ENCODE measurements at regions of chr22 and their contacts with region 1.

Region 1: GRCh38 chr22:27474711-27475547 is 326.6 kb downstream of the MN1 start:
- DNase-seq: peak; percentile 93 to 100
- H3K4me3 ChIP-seq: peak overlapping the region; percentile 57
- H3K27ac ChIP-seq: peak overlapping the region; percentile 98
- H3K4me1 ChIP-seq: peaks cover 47% of the 10 kb centered on the region
- H3K27me3 ChIP-seq: no peaks in the 10 kb centered on the region
- CTCF ChIP-seq: no peak

Region 2: GRCh38 chr22:27113211-27113635 is 361.7 kb before region 1 on chr22:
- CTCF ChIA-PET with region 1: no interaction called
- POLR2A ChIA-PET with region 1: no interaction called
- intact Hi-C with region 1: loop called (anchors 5 kb)
- DNase-seq: peak; percentile 57 to 95
- H3K4me3 ChIP-seq: no peak overlapping the region
- H3K27ac ChIP-seq: peak overlapping the region; percentile 77
- H3K4me1 ChIP-seq: peaks cover 74% of the 10 kb centered on the region
- H3K27me3 ChIP-seq: no peaks in the 10 kb centered on the region
- CTCF ChIP-seq: no peak

Region 3: DNA sequence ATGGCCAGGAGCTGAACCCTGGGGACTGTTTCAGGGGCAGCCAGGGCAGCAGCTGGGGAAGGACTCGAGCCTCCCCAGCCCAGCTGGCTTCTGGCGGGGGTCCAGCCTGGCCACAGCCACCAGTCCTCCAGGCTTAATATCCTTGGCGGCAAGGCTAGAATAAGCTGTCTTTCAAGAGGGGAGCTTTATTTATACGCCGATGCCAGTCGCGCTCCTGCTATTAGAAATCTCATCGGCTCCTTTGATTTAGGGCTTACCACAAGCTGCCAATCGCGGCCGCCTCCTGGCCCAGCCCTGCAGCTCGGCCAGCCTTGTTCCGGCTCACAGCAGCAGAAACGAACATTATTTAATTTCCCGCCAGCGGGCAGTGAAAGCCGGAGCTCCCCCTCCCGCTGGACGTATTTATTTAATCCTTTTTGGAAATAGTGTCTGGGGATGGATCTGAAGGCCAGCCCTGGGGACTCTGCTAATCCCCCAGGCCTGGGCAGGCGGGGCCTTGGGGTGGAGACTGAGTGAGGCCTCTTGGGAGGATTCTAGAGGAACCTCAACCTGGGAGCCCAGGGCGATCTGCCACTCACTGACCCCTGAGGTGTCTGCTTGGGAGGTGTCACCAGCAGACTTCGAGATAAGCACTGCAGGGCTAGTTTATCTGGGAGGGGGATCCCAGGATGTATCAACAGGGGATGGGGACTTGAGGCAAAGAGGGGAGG is 36.5 kb before region 1 on chr22:
- CTCF ChIA-PET with region 1: no interaction called
- POLR2A ChIA-PET with region 1: no interaction called
- intact Hi-C with region 1: loop called (anchors 2 kb)
- DNase-seq: peak in 1 of 2 experiments; percentile 27
- H3K4me3 ChIP-seq: no peak overlapping the region
- H3K27ac ChIP-seq: no peak overlapping the region
- H3K4me1 ChIP-seq: peaks cover 10% of the 10 kb centered on the region
- H3K27me3 ChIP-seq: no peaks in the 10 kb centered on the region
- CTCF ChIP-seq: no peak

Region 4: DNA sequence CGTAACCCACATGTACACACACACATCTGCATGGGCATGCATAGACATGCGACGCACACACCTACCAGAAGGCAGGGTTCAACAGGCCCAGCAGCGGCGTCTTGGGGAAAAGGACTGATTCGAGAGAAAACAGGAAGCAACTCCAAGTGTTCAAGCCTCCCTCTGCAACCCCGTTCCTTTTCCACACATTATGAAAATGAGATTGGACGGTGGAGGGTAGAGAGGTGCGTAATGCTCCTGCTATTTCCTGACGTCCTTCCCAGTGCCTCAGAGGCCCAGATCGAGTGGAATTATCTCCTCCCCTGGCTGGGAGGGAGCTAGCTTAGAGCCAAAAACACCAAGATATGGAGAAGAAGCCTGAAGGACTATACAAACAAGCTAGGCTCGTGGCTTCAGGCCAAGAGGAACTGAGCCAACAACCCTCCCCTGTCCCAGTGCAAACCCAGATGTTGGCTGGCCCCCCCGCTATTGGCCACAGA is 37.4 kb after region 1 on chr22:
- CTCF ChIA-PET with region 1: no interaction called
- POLR2A ChIA-PET with region 1: interaction called, 8 read pairs
- intact Hi-C with region 1: loop called (anchors 1 kb)
- DNase-seq: peak in 1 of 2 experiments; percentile 63
- H3K4me3 ChIP-seq: no peak overlapping the region
- H3K27ac ChIP-seq: no peak overlapping the region
- H3K4me1 ChIP-seq: no peaks in the 10 kb centered on the region
- H3K27me3 ChIP-seq: no peaks in the 10 kb centered on the region
- CTCF ChIP-seq: no peak

Region 5: DNA sequence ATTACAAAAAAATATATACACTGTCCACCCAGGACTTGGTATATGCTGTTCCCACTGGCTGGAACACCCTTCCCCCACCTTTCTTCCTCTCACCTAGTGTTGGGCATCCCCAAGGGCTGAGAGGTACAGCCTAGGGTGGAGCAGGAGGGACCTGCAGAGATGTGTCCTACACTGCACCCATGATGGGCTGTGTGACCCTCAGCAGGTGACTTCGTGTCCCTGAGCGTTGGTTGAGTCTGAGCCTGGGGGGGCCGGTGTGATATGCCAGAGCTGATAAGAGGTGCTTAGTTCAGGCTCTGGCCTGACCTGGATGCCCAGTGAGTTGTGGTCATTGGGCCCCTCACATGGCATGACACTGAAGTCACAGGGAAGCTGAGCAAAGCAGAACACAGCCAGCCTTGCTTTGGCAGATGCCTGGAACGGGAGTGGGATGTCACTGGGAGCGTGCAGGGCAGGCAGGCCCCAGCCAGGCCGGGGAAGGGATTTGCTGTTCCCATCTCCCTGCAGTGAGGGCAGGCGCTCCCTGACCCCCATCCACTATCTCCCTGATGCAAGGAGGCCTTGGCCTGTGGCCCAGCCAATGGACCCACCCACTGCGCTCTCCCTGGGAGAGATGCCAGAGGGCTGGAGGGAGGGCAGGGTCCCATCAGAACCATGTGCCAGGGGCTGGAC is 187.6 kb after region 1 on chr22:
- CTCF ChIA-PET with region 1: no interaction called
- POLR2A ChIA-PET with region 1: interaction called, 4 read pairs
- intact Hi-C with region 1: loop called (anchors 1 kb)
- DNase-seq: peak in 1 of 2 experiments; percentile 72
- H3K4me3 ChIP-seq: no peak overlapping the region
- H3K27ac ChIP-seq: peak overlapping the region; percentile 89
- H3K4me1 ChIP-seq: peaks cover 38% of the 10 kb centered on the region
- H3K27me3 ChIP-seq: no peaks in the 10 kb centered on the region
- CTCF ChIP-seq: no peak

Region 6: GRCh38 chr22:27726697-27727449 is 251.9 kb after region 1 on chr22:
- CTCF ChIA-PET with region 1: no interaction called
- POLR2A ChIA-PET with region 1: interaction called, 4 read pairs
- intact Hi-C with region 1: loop called (anchors 5 kb)
- DNase-seq: peak; percentile 83 to 84
- H3K4me3 ChIP-seq: peak overlapping the region; percentile 23; the same call in 1 of the 2 replicates
- H3K27ac ChIP-seq: peak overlapping the region; percentile 76
- H3K4me1 ChIP-seq: peaks cover 29% of the 10 kb centered on the region
- H3K27me3 ChIP-seq: no peaks in the 10 kb centered on the region
- CTCF ChIP-seq: no peak

Measured in PC-9 (cell line).